Heart left ventricle (tissue), 16 donors: ENCODE measurements at regions of chr1 and their contacts with region 1.

Region 1: GRCh38 chr1:9778905-9779304 is 44.9 kb downstream of the CLSTN1 start:
- DNase-seq: no peak
- ATAC-seq: no peak
- H3K4me3 ChIP-seq: no peak overlapping the region
- H3K27ac ChIP-seq: no peak overlapping the region
- H3K4me1 ChIP-seq: no peaks in the 10 kb centered on the region
- H3K27me3 ChIP-seq: no peaks in the 10 kb centered on the region
- CTCF ChIP-seq: no peak
- POLR2A ChIP-seq: no peak

Region 2: DNA sequence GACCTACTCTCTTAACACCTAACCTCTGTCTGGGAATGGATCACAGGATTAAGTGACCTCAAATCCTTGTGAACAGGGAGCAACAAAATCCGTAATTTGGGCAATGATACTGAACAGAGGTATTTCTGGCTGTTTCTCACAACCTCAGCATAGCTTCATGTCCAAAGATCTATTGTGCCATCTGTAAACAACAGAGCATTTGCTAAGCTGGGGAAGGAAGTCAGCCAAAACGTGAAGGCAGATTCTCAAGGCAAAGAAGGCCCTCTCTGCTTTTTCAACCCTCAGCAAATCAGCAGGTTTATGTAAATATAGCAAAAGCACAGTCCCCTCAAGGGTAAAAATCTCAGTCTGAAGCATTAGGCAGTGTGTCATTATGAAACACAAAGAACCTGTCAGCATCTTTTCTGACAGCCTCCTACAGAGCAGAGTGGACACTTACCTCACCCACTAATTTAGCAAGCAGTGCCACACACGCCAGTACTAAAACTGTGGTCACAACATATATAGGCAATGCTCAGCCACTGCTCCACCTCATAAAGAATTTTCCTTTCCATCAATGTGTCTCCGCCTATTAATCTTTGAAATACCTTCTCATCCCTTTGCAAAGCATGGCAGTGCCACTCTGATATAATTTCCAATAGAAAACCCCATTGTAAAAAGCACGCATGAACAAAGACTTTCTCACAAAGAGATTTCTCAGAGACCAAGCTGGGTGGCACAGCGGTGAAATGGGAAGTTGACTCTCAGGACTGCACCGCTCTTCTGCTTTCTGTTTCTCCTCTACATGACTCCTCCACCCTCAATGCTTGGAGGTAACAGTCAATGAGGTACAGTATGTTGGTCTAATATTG is 1149.4 kb before region 1 on chr1:
- intact Hi-C with region 1: no loop called
- DNase-seq: no peak
- ATAC-seq: peak; percentile 60 to 86 (median 78)
- H3K4me3 ChIP-seq: no peak overlapping the region
- H3K27ac ChIP-seq: peak overlapping the region in 9 of 12 donors; percentile 42 to 68 (median 56)
- H3K4me1 ChIP-seq: peaks cover 0 to 69% (median 52%) of the 10 kb centered on the region in 12 donors
- H3K27me3 ChIP-seq: no peaks in the 10 kb centered on the region
- CTCF ChIP-seq: no peak
- POLR2A ChIP-seq: no peak

Region 3: GRCh38 chr1:9861360-9861759 is 82.5 kb after region 1 on chr1:
- intact Hi-C with region 1: loop called in 4 of 10 experiments (anchors 2 to 5 kb)
- DNase-seq: peak in 1 of 5 donors; percentile 22
- ATAC-seq: no peak
- H3K4me3 ChIP-seq: no peak overlapping the region
- H3K27ac ChIP-seq: no peak overlapping the region
- H3K4me1 ChIP-seq: peaks cover 0 to 18% (median 6%) of the 10 kb centered on the region in 12 donors
- H3K27me3 ChIP-seq: no peaks in the 10 kb centered on the region
- CTCF ChIP-seq: no peak
- POLR2A ChIP-seq: no peak